ENCODE measurements at regions of chr6 and their contacts with region 1.

Region 1: DNA sequence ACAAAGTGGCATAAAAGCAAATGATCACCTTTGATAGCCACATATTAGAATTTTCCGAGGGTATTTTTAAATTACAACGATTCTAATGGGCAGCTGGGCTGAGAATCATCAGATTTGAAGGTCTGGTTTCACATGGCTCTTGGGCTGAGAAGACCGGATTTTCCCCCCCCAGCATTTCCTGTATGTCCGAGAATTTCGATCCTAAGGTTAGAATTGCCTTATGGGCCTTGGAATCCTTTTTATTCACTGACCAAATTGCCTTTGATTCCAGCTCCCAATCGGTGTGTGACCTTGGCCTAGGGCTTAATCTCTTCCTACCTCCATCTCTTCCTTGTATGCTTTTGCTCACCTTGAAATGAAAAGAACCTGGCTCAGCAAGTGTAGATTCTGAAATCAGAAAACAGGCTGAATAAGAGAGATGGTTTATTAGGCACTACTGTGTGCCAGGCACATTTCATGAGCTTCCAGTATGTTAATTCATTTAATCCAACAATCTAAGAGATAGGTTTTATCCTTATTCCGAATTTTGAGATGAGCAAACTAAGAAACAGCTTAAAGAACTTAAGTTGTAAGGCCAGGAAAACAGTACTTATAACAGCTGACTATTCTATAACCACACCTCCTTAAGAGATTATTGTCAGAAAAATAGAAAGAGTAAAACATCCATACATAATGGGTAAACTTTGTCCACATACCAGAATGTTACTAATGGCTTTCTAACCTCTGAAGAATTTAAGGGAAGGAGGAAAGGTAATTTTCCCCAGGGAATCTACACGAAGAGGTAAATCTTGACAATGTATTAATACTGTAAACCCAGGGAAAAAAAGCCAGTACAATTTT is 39.4 kb downstream of the HFE start:
- DNase-seq: no peak
- H3K4me3 ChIP-seq: peak overlapping the region; percentile 89
- H3K27ac ChIP-seq: peak overlapping the region; percentile 99
- H3K4me1 ChIP-seq: peaks cover 79% of the 10 kb centered on the region
- H3K27me3 ChIP-seq: no peaks in the 10 kb centered on the region
- CTCF ChIP-seq: no peak

Region 2: DNA sequence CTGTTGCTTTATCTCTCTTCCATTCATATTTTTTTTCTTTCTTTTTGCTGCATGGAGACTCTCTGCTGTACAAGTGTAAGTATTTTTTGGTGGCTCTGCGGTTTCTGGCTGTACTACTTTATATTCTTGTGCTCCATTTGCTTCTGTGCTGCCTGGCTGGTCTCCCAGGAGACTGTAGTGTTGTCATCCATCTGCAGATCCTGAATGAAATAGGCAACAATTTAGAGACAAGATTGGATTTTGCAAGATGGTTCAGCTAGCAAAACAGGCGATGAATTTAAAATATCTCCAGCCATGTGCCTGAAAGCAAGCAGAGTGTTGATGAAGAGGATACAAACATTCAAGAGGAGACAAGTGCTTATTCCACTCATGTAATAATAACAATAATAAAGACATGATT is 549.7 kb before region 1 on chr6:
- intact Hi-C with region 1: no loop called
- DNase-seq: no peak
- H3K4me3 ChIP-seq: no peak overlapping the region
- H3K27ac ChIP-seq: no peak overlapping the region
- H3K4me1 ChIP-seq: no peaks in the 10 kb centered on the region
- H3K27me3 ChIP-seq: no peaks in the 10 kb centered on the region
- CTCF ChIP-seq: no peak

Region 3: GRCh38 chr6:25769986-25770385 is 356.6 kb before region 1 on chr6:
- intact Hi-C with region 1: no loop called
- DNase-seq: no peak
- H3K4me3 ChIP-seq: no peak overlapping the region
- H3K27ac ChIP-seq: no peak overlapping the region
- H3K4me1 ChIP-seq: no peaks in the 10 kb centered on the region
- H3K27me3 ChIP-seq: peaks cover 24% of the 10 kb centered on the region
- CTCF ChIP-seq: no peak

Region 4: GRCh38 chr6:26156076-26156849 is 29.6 kb after region 1 on chr6:
- intact Hi-C with region 1: loop called (anchors 1 kb)
- DNase-seq: peak; percentile 90
- H3K4me3 ChIP-seq: peak overlapping the region; percentile 93
- H3K27ac ChIP-seq: peak overlapping the region; percentile 97
- H3K4me1 ChIP-seq: peaks cover 37% of the 10 kb centered on the region
- H3K27me3 ChIP-seq: no peaks in the 10 kb centered on the region
- CTCF ChIP-seq: no peak

Measured in left ventricle myocardium inferior (tissue), 1 donor.